Activated CD4-positive, alpha-beta T cell treated with anti-CD3 and anti-CD28 coated beads for 36 hours (primary cell): ENCODE measurements at regions of chr20 and their contacts with region 1.

Region 1: GRCh38 chr20:53939572-53940359 is 130.6 kb downstream of the BCAS1 start:
- DNase-seq: peak; percentile 88
- ATAC-seq: peak; percentile 88
- H3K4me3 Mint-ChIP-seq: no peak overlapping the region
- H3K27ac Mint-ChIP-seq: no peak overlapping the region
- H3K4me1 Mint-ChIP-seq: peaks cover 37% of the 10 kb centered on the region
- H3K27me3 Mint-ChIP-seq: no peaks in the 10 kb centered on the region

Region 2: GRCh38 chr20:53149148-53149889 is 790.4 kb before region 1 on chr20:
- CTCF ChIA-PET with region 1: no interaction called
- POLR2A ChIA-PET with region 1: no interaction called
- intact Hi-C with region 1: loop called in 1 of 2 experiments (anchors 10 kb)
- DNase-seq: no peak
- ATAC-seq: no peak
- H3K4me3 Mint-ChIP-seq: no peak overlapping the region
- H3K27ac Mint-ChIP-seq: peak overlapping the region; percentile 76
- H3K4me1 Mint-ChIP-seq: peaks cover 66% of the 10 kb centered on the region
- H3K27me3 Mint-ChIP-seq: peaks cover 3% of the 10 kb centered on the region

Region 3: GRCh38 chr20:53413186-53413631 is 526.6 kb before region 1 on chr20:
- CTCF ChIA-PET with region 1: interaction called, 3 read pairs
- POLR2A ChIA-PET with region 1: no interaction called
- intact Hi-C with region 1: loop called (anchors 5 to 10 kb)
- DNase-seq: peak; percentile 75
- ATAC-seq: peak; percentile 71
- H3K4me3 Mint-ChIP-seq: no peak overlapping the region
- H3K27ac Mint-ChIP-seq: peak overlapping the region; percentile 38
- H3K4me1 Mint-ChIP-seq: peaks cover 6% of the 10 kb centered on the region
- H3K27me3 Mint-ChIP-seq: no peaks in the 10 kb centered on the region

Region 4: DNA sequence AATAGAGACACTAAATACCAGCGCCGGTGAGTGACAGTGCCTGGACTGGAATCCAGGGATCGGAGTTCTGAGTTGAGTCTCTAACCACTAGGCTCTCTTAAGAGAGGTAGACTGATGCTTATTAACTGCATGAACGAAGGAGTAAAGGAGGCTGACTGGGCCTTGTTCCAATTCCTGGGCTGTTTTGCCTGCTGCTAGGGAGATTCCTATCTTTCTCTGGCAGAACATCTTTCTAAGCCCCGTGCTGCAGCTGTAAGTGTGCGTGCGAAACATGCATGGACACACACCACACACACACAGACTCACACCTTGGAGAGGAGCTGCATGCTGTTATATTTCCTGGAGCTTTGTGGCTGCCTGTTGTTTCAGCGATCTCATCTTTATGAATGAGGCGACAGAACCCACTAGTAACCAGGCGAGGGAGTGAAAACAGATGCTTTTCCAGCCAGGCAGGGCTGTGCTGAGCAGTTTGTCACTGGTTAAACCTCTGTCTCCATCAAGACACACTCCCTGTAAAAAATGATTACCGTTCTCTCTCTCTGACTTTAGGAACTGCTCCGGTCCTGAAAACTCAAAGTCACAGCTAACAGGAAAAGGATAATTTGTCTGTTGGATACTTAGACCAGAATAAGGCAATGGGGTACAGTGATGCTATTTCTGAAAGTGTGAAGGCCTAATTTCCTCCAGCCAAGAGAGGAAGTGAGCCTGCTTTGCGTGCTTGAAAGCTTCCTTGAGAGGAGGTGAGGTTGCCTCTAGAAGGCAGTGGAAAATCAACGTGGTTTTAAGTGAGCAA is 188.7 kb before region 1 on chr20:
- CTCF ChIA-PET with region 1: no interaction called
- POLR2A ChIA-PET with region 1: no interaction called
- intact Hi-C with region 1: loop called in 1 of 2 experiments (anchors 5 kb)
- DNase-seq: peak; percentile 60
- ATAC-seq: peak; percentile 70
- H3K4me3 Mint-ChIP-seq: peak overlapping the region; percentile 22
- H3K27ac Mint-ChIP-seq: peak overlapping the region; percentile 96
- H3K4me1 Mint-ChIP-seq: peaks cover 73% of the 10 kb centered on the region
- H3K27me3 Mint-ChIP-seq: no peaks in the 10 kb centered on the region

Region 5: DNA sequence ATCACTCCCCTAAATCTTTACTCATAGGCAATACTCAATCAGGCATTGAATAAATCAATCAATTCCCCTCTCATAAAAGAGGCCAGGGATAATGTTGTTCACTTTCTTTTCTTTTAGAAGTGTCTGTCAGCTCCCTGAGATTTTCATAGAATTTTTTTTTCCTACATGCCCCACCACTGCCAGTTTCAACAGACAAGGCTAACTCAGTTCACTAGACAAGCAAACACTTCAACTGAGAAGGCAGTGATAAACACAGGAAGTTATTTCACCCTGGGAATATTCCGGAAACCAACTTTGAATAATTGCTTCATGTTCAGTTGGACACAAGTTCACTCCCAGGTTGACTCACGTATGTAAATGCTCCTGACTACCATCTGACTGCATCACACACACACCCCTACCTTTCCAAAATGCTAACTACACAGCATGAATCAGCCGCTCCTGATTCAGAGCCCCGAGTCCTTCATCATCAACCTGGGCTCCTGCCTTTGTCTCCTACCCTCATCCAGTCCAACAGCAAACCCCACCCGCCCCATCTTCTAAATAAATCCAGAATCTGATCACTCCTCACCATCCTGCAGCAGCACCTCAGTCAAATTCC is 13.2 kb before region 1 on chr20:
- CTCF ChIA-PET with region 1: interaction called, 12 read pairs
- POLR2A ChIA-PET with region 1: no interaction called
- intact Hi-C with region 1: no loop called
- DNase-seq: peak; percentile 66
- ATAC-seq: peak; percentile 99
- H3K4me3 Mint-ChIP-seq: no peak overlapping the region
- H3K27ac Mint-ChIP-seq: peak overlapping the region; percentile 61
- H3K4me1 Mint-ChIP-seq: peaks cover 32% of the 10 kb centered on the region
- H3K27me3 Mint-ChIP-seq: no peaks in the 10 kb centered on the region

Region 6: DNA sequence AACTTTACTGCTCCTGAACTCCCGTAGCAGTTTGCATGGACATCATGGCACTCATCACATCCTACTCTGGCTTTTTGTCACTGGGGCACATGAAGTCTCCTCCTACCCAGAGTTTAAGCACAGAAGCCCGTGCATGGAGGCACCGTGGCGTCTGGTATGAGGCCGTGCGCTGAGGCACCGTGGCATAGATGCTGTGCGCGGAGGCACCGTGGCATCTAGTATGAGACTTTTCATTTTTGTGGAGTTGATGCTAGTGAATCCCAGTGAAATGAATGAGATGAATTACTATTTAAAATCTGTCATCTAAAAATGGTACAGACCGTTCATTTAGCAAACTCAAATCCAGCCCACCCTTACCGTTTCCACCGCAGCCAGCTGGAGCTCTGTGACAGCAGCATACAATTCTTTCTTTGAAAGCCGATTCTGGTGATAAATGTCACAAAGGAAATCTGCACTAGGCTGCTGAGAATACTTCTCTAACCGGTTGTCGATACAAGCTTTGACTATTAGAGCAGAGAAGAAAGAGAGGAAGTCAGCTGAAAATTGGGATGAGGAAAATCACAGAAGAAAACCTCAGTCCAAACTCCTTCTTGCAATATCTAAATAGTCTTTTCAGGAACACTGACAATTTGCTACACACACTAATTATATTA is 222.7 kb after region 1 on chr20:
- CTCF ChIA-PET with region 1: no interaction called
- POLR2A ChIA-PET with region 1: no interaction called
- intact Hi-C with region 1: no loop called
- DNase-seq: no peak
- ATAC-seq: no peak
- H3K4me3 Mint-ChIP-seq: no peak overlapping the region
- H3K27ac Mint-ChIP-seq: no peak overlapping the region
- H3K4me1 Mint-ChIP-seq: no peaks in the 10 kb centered on the region
- H3K27me3 Mint-ChIP-seq: peaks cover 24% of the 10 kb centered on the region

Region 7: DNA sequence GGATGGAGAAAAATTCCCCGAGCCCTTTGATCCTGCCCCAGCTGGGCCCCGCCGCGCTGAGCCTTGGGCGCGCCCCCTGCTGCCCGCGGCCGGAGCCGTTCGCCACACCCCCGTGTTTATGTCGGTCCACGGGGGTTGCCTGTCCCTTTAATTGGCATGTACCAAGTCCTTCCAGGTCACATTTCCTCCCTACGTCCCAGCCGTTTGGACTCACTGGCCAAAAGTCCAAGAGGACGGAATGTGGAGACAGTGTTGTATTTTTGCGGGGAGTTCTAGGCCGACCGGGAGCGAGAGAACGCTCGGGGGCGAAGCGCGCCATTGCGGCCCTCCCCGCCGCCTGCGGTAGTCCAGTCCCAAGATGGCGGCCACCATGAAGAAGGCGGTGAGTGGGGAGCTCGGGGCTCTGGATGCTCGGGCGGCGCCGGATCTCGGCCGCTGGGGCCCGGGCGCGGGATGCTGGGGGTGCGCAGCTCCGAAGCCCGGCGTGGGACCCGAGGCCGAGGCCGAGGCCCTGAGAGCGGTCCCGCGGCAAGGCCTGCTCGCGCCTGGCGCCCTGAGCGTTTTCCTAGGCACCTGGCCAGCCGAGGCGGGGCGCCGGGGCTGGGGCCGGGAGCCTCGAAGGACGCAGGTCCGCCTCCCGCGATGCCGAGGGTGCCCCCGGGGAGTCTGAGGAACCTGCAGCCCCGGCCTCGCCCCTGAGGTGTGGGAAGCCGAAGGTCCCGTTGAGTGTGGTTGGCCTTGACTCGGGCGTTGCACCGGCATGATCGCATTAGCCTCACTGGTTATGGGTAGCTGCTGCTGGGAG is 268.2 kb after region 1 on chr20 and contains the start of gene PFDN4:
- CTCF ChIA-PET with region 1: interaction called, 3 read pairs
- POLR2A ChIA-PET with region 1: no interaction called
- intact Hi-C with region 1: loop called in 1 of 2 experiments (anchors 10 kb)
- DNase-seq: peak; percentile 88
- ATAC-seq: peak; percentile 82
- H3K4me3 Mint-ChIP-seq: peak within 1 kb of the TSS; percentile 80
- H3K27ac Mint-ChIP-seq: peak within 1 kb of the TSS; percentile 99
- H3K4me1 Mint-ChIP-seq: peaks cover 47% of the 10 kb centered on the region
- H3K27me3 Mint-ChIP-seq: no peaks in the 10 kb centered on the region
- total RNA-seq, gene PFDN4: 55.4 to 60.5 TPM